GM12878 (cell line): ENCODE measurements at regions of chr6 and their contacts with region 1.

Region 1: DNA sequence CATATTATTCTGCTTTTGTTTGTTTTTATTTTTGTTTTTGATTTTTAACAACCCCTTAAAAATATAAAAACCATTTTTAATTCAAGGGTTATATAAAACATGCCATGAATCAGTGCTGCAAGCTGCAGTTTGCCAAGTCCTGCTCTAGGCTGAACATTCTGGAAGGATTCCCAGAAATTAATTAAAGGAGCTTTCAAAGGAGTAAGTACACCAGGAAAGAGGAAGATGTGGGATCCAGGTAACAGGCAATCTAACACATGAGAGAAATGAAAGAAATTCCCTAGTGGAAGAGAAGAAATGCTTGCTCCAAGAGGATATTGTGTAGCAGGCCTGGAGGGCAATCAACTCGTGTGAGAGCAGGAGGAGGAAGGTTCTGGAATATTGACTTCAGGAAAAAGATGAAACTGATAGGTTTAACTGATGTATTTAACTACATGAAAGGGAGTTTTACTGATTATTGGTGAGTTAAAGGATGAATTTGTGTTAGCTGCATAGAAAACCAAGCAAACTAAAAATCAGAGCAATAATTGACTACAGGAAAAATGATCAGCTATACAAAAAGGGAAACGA is 146.0 kb upstream of the PHACTR1 start:
- DNase-seq: no peak
- ATAC-seq: no peak
- H3K4me3 ChIP-seq: no peak overlapping the region
- H3K27ac ChIP-seq: no peak overlapping the region
- H3K4me1 ChIP-seq: no peaks in the 10 kb centered on the region
- H3K27me3 ChIP-seq: no peaks in the 10 kb centered on the region
- CTCF ChIP-seq: no peak
- EP300 ChIP-seq: no peak
- POLR2A ChIP-seq: no peak
- RAD21 ChIP-seq: no peak

Region 2: GRCh38 chr6:11922901-11923300 is 647.6 kb before region 1 on chr6:
- CTCF ChIA-PET with region 1: no interaction called
- POLR2A ChIA-PET with region 1: interaction called, 14 read pairs
- RAD21 ChIA-PET with region 1: no interaction called
- SMC1A ChIA-PET with region 1: no interaction called
- in situ Hi-C with region 1: no loop called
- intact Hi-C with region 1: no loop called
- DNase-seq: no peak
- ATAC-seq: no peak
- H3K4me3 ChIP-seq: no peak overlapping the region
- H3K27ac ChIP-seq: no peak overlapping the region
- H3K4me1 ChIP-seq: no peaks in the 10 kb centered on the region
- H3K27me3 ChIP-seq: no peaks in the 10 kb centered on the region
- CTCF ChIP-seq: no peak
- EP300 ChIP-seq: no peak
- POLR2A ChIP-seq: no peak
- RAD21 ChIP-seq: no peak

Region 3: GRCh38 chr6:12560131-12560714 is 10.3 kb before region 1 on chr6:
- CTCF ChIA-PET with region 1: no interaction called
- POLR2A ChIA-PET with region 1: no interaction called
- RAD21 ChIA-PET with region 1: no interaction called
- SMC1A ChIA-PET with region 1: interaction called, 10 read pairs
- in situ Hi-C with region 1: no loop called
- intact Hi-C with region 1: no loop called
- DNase-seq: no peak
- ATAC-seq: no peak
- H3K4me3 ChIP-seq: no peak overlapping the region
- H3K27ac ChIP-seq: no peak overlapping the region
- H3K4me1 ChIP-seq: no peaks in the 10 kb centered on the region
- H3K27me3 ChIP-seq: no peaks in the 10 kb centered on the region
- CTCF ChIP-seq: no peak
- EP300 ChIP-seq: no peak
- POLR2A ChIP-seq: no peak
- RAD21 ChIP-seq: no peak